ENCODE measurements at regions of chr1 and their contacts with region 1.

Region 1: DNA sequence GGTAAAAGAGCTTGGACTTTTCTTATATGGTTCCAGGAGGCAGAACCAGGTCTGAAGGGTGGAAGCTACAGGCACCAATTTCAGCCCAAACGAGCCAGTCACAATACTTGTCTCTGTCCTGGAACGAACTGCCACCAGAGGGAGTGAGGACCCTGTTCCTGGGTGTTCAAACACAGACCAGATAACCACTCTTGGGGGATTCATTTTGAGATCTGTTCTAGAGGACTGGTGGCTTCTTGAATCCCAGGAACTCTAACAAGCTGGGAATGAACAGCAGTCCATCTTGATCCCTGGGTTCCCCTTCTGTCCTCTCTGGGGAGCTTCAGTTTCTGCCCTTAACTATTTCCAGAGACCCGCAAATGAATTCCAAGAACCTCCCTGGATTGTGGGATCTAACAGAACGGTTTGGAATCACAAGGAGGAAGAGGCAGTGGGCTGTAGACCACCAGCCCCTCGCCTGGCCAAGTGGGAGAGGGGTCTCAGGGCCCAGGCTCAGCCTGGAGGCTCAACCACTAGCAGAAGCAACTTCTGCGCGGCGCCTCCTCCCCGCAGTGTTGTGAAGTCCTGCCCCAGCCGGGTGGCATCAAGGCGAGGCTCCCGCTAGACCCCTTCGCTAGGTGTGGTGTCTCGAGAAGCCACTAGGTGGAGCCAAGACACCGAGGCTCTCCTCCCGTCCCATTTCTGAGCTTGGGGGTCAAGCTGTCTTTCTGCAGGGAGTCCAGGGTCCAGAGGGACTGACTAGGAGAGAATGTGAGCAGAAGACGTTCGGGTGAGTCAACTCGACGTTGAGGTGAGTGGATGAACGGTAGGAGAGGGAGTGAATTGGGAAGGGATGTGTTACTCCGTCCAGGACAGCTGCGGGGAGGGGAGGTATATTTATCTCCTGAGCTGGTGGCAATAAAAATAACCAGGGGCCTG is 12.1 kb upstream of the NES start:
- DNase-seq: peak; percentile 68 to 82 (median 80)
- ATAC-seq: peak; percentile 89
- H3K4me3 ChIP-seq: no peak overlapping the region
- H3K4me1 ChIP-seq: peaks cover 16% of the 10 kb centered on the region
- CTCF ChIP-seq: peak; percentile 84

Region 2: DNA sequence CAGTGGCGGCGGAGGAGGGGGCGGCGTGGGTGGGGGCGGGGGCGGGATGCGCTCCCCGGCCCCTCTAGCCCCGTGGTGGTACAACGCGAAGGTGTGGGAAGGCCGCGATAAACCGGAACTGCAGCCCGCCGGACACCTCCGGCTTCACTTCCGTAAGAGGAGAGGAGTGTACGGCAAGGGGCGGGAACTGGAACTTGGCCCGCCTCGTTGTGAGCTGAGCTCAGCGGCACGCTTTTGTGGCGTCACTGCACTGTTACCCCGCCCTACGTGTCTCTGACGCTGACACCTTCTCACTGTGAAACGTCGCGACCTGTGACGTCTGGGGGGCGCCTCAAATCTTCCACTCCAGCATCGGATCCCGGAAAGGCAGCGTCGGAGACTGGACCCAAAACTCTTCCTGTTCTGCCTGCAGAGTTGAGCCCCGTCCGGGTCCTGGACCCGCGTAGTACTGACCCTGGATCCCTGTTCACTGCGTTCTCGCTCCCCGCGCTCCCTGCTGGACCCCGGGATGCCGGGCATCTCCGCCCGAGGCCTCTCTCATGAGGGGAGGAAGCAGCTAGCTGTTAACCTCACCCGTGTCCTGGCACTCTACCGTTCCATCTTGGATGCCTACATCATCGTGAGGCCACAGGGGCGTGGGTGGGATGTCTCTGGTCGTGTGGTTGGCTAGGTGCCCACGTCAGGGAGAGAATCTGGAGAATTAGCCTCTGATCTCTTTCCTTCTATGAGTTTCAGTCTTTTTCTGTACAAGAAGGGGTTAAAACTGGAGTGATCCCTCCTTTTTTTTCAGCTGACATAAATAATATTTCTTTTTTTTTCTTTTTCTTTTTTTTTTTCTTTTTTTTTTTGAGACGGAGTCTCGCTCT is 39.5 kb after region 1 on chr1 and contains the start of gene ISG20L2:
- intact Hi-C with region 1: loop called in 1 of 2 experiments (anchors 5 kb)
- DNase-seq: peak; percentile 95 to 99 (median 98)
- ATAC-seq: peak; percentile 93
- H3K4me3 ChIP-seq: peak within 1 kb of the TSS; percentile 60
- H3K4me1 ChIP-seq: peaks cover 41% of the 10 kb centered on the region
- CTCF ChIP-seq: no peak
- total RNA-seq, gene ISG20L2: 27.8 to 33.0 (median 31.0) TPM

Measured in mucosa of descending colon (tissue), 3 donors.